ENCODE measurements at regions of chr5 and their contacts with region 1.

Region 1: GRCh38 chr5:67047160-67047559 is 149.4 kb downstream of the CD180 start:
- DNase-seq: peak; percentile 31 to 77 (median 77)
- ATAC-seq: peak; percentile 67 to 83
- H3K4me3 ChIP-seq: no peak overlapping the region
- H3K27ac ChIP-seq: no peak overlapping the region
- H3K4me1 ChIP-seq: peaks cover 20% of the 10 kb centered on the region
- H3K27me3 ChIP-seq: no peaks in the 10 kb centered on the region

Region 2: DNA sequence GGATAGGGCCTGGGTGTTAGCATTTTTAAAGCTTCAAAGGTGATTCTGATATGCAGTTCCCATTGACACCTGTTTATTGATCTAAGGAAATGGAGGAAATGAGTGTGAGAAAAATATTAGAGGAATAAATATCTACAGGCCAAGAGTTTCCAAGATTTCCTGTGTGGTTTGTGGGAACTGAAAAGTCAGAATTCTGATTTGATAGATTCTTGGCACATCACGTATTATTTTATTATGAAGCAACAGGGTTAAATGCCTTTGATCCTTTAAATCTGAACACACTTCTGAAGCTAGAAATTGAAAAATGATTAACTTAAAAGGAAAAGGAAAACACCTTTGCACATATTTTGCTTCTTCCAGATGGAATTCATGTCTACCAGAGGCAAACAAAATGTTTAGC is 35.8 kb after region 1 on chr5:
- intact Hi-C with region 1: loop called in 1 of 4 experiments (anchors 2 kb)
- DNase-seq: no peak
- ATAC-seq: no peak
- H3K4me3 ChIP-seq: no peak overlapping the region
- H3K27ac ChIP-seq: no peak overlapping the region
- H3K4me1 ChIP-seq: peaks cover 6% of the 10 kb centered on the region
- H3K27me3 ChIP-seq: no peaks in the 10 kb centered on the region

Region 3: DNA sequence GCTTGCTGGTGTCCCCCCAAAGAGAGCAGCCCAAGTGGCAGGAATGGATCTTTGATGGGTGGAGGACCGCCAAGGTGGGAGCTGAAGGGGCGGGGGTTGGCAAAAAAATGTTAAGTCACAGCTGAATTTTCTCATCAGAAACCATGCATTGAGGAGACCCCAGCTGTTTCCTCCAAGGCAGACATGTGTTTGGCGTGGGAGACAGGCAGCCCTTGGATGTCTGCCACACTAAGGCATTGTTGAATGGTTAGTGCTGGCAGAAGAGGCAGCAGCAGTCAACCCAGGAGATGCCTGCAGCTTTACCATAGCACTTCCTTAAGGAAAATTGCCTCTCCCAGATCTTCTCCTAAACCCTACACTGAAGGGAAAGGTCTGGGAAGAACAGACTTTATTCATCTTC is 544.3 kb after region 1 on chr5:
- intact Hi-C with region 1: no loop called
- DNase-seq: no peak
- ATAC-seq: no peak
- H3K4me3 ChIP-seq: no peak overlapping the region
- H3K27ac ChIP-seq: no peak overlapping the region
- H3K4me1 ChIP-seq: no peaks in the 10 kb centered on the region
- H3K27me3 ChIP-seq: no peaks in the 10 kb centered on the region